ENCODE measurements at regions of chr20 and their contacts with region 1.

Region 1: GRCh38 chr20:49344975-49345374 is 67.1 kb upstream of the ZNFX1 start:
- DNase-seq: no peak

Region 2: DNA sequence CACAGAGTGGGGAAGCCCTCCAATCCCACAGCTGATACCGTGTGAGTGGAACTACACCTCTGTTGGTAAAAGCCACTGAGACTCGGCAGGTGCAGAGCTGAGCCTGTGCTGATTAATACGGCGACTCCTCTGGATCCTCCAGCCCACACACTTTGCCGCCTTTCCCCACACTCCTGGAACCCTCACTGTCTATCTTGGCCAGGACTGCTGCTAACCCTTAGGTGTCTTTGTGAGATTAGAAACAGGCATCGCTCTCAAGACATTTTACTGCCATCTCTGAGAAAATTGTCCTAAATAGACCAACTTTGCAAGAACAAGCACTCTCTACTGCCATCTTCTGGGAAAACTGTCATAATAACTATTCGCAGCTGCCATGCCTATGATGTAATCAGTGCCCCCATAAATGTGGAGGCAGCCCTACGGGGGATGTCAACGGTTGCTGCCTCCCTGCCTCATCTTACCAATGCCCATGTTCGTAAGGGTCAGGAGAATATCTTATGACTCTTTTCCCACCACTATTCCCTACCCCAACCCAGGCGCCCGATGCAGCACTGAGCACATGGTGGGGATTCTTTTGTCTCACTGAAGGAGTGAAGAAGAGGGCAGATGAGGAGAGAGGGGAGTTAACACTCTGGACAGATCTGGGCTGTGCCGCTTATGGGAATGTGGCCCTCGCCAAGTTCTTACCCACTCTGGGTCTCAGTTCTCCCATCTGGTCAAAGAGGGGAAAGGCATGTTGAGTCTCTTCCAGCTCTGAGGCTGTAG is 163.6 kb after region 1 on chr20:
- in situ Hi-C with region 1: loop called (anchors 25 kb)
- DNase-seq: peak; percentile 36

Region 3: DNA sequence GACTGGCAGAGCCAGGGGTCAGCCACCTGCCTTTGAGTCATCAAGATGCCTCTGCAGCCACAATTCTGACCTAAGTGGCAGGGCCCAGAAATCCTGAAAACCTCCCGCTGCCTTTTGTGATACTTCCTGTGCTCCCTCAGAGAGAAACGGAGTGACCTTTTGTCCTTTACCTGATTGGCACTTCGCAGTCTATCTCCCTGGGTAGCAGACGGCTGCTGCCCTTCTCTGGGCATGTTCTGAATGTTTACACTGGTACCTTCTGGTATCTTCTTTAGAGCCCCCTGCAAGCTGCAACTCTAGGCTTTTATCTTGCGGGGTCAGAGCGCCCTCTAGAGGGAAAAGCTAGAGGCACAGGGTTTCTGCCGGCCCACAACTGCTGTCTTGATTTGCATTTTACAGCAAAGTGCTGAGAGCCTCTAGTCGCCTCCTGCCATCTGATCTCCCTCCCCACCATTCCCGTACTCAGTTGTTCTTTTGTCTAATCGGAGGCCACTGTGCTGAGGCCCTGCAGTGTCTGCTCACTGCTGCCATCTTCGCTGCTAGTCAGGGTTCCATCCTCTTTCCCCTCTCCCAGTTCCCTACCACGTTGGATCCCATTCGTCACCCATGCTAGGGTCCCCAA is 543.5 kb after region 1 on chr20:
- in situ Hi-C with region 1: loop called (anchors 25 kb)
- DNase-seq: peak; percentile 79

Measured in KBM-7 (cell line).